ENCODE measurements at regions of chr5 and their contacts with region 1.

Region 1: GRCh38 chr5:84382363-84383295 is 2.1 kb downstream of the EDIL3 start:
- DNase-seq: peak in 1 of 2 donors; percentile 69
- H3K4me3 ChIP-seq: peak overlapping the region; percentile 60 to 88
- H3K27ac ChIP-seq: peak overlapping the region; percentile 90 to 94
- H3K4me1 ChIP-seq: peaks cover 0 to 11% of the 10 kb centered on the region in 2 donors
- H3K27me3 ChIP-seq: no peaks in the 10 kb centered on the region
- CTCF ChIP-seq: no peak

Region 2: DNA sequence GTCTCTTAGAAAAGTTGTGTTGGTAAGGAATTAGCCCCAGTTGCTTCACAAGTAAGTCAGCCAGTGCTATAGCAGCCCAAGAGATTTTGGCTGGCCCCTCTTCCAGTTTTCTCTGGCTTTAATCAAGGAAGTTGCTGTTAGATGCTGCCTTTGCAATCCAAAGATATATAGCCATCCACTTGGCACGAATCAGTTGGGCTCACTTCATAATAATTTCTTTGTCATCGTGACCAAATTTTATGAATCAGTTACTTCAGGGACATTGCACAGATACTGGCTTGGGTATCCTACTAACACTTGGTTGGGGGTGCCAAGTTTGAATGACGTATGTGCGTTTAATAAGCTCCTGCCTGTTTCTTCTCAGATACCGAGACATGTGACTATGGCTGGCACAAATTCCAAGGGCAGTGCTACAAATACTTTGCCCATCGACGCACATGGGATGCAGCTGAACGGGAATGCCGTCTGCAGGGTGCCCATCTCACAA is 829.6 kb before region 1 on chr5:
- intact Hi-C with region 1: loop called (anchors 10 kb)
- DNase-seq: peak; percentile 18 to 92
- H3K4me3 ChIP-seq: no peak overlapping the region
- H3K27ac ChIP-seq: peak overlapping the region; percentile 75 to 82
- H3K4me1 ChIP-seq: peaks cover 0 to 42% of the 10 kb centered on the region in 2 donors
- H3K27me3 ChIP-seq: no peaks in the 10 kb centered on the region
- CTCF ChIP-seq: no peak

Region 3: DNA sequence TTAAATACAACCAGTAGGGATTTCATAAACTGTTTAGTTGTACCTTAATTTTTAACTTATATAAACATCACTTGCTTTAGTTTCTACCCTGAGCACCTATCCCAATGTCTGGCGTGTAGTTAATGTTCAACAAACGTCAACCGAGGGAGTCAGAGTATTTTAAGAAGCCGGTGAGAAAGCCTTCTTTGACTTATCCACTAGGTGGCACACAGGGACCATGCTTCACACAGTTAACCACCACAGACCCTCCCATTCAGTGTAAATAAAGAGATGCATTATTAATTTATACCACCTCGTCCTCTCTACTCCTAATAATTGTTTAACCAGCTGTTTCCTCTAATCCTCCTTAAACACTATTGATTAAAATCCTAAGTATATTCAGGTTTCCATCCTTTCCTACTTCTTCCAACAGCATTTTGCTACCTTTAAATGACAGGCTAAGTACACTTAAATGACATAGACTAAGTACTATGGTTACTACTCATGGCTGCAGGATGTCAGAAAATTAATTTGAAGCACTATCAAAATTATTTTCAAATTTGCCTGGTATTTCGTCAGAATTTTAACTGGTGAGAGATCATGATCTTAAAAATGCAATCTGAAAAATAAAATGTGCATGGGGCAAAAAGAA is 664.3 kb before region 1 on chr5:
- intact Hi-C with region 1: loop called (anchors 5 kb)
- DNase-seq: peak in 1 of 2 donors; percentile 70
- H3K4me3 ChIP-seq: peak overlapping the region in 1 of 2 donors; percentile 5
- H3K27ac ChIP-seq: no peak overlapping the region
- H3K4me1 ChIP-seq: peaks cover 0 to 12% of the 10 kb centered on the region in 2 donors
- H3K27me3 ChIP-seq: no peaks in the 10 kb centered on the region
- CTCF ChIP-seq: peak; percentile 71 to 91 (median 77)

Region 4: GRCh38 chr5:83927140-83927733 is 455.4 kb before region 1 on chr5:
- intact Hi-C with region 1: loop called (anchors 10 kb)
- DNase-seq: peak in 1 of 2 donors; percentile 71
- H3K4me3 ChIP-seq: no peak overlapping the region
- H3K27ac ChIP-seq: no peak overlapping the region
- H3K4me1 ChIP-seq: no peaks in the 10 kb centered on the region
- H3K27me3 ChIP-seq: no peaks in the 10 kb centered on the region
- CTCF ChIP-seq: peak; percentile 33 to 72 (median 47)

Region 5: GRCh38 chr5:84274585-84275468 is 107.8 kb before region 1 on chr5:
- intact Hi-C with region 1: loop called (anchors 5 kb)
- DNase-seq: no peak
- H3K4me3 ChIP-seq: no peak overlapping the region
- H3K27ac ChIP-seq: no peak overlapping the region
- H3K4me1 ChIP-seq: no peaks in the 10 kb centered on the region
- H3K27me3 ChIP-seq: no peaks in the 10 kb centered on the region
- CTCF ChIP-seq: peak in 2 of 3 experiments; percentile 49 to 61

Region 6: DNA sequence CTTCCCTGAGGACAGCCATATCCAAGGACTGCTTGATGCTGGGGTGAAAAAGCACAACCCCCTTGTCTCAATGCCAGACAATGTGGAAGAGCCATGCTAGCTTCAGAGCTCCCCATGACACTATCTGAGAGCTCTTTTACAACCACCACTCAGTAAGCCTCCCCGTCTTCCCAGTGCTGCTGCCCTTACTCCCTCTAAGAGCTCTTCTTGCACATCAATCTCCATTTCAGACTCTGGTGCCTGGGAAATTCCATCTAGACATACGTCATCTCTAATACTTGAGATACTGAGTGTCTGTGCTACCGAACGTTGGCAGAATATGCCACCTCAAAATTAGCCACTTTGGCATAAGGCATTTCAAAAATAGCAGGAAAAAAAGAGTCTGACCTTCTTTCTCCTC is 92.5 kb before region 1 on chr5:
- intact Hi-C with region 1: loop called (anchors 1 kb)
- DNase-seq: no peak
- H3K4me3 ChIP-seq: peak overlapping the region in 1 of 2 donors; percentile 0
- H3K27ac ChIP-seq: peak overlapping the region; percentile 31 to 55
- H3K4me1 ChIP-seq: peaks cover 0 to 17% of the 10 kb centered on the region in 2 donors
- H3K27me3 ChIP-seq: no peaks in the 10 kb centered on the region
- CTCF ChIP-seq: no peak

Measured in ascending aorta (tissue), 2 donors.